A549 (cell line): ENCODE measurements at regions of chr3 and their contacts with region 1.

Region 1: DNA sequence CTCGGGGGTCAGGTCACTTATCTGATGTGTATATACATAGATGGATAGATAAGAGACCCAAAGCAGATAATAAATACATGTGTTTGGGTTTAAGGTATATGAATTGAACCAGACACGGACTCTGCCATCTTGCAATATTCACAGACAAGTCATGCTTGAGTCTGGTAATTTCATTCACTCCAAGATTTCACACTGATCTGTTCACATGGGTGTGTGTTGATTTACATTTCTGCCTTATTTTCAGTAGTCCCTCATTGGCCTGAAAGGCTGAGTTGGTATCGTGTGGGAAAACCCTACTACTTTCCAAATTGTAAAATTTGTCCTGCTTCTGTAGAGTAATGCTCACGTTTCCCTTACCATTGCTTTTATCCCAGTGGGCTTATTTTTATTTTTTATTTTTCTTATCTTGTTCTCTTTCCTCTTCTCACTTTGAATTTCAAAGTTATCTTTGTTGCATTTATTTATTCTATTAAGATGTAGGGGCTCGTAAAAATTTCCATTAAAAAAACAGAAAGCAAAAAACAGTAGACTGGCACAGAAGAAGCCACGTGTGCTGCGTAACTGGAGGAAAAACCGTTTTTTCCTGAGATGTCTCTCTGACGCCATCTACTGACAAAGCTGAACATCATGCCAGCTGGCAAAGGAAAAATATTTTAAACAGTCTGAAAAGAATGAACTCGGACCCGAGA is 10.8 kb upstream of the MFSD1 start:
- DNase-seq: peak; percentile 54 to 76
- ATAC-seq: peak; percentile 35 to 61; a peak in 3 of 6 replicates
- H3K4me3 ChIP-seq: no peak overlapping the region
- H3K27ac ChIP-seq: peak overlapping the region; percentile 79
- H3K4me1 ChIP-seq: peaks cover 55% of the 10 kb centered on the region
- CTCF ChIP-seq: peak; percentile 91
- EP300 ChIP-seq: no peak
- POLR2A ChIP-seq: no peak
- RAD21 ChIP-seq: peak; percentile 88 to 94

Region 2: GRCh38 chr3:158644345-158644908 is 146.6 kb before region 1 on chr3 and contains the start of gene GFM1:
- CTCF ChIA-PET with region 1: interaction called, 10 read pairs
- POLR2A ChIA-PET with region 1: no interaction called
- DNase-seq: peak; percentile 82 to 97
- ATAC-seq: peak; percentile 98 to 100
- H3K4me3 ChIP-seq: peak within 1 kb of the TSS; percentile 72
- H3K27ac ChIP-seq: peak within 1 kb of the TSS; percentile 87 to 99
- H3K4me1 ChIP-seq: peaks cover 14% of the 10 kb centered on the region
- CTCF ChIP-seq: peak; percentile 94
- EP300 ChIP-seq: no peak
- POLR2A ChIP-seq: peak; percentile 57; the same call in 1 of the 2 replicates
- RAD21 ChIP-seq: peak; percentile 49 to 53
- polyA plus RNA-seq, gene GFM1: 54.5 and 71.4 TPM in 2 replicates

Region 3: GRCh38 chr3:158672293-158673176 is 118.5 kb before region 1 on chr3 and contains the start of gene LXN:
- CTCF ChIA-PET with region 1: interaction called, 10 read pairs
- POLR2A ChIA-PET with region 1: interaction called, 3 read pairs
- DNase-seq: peak; percentile 89 to 96
- ATAC-seq: peak; percentile 100
- H3K4me3 ChIP-seq: peak within 1 kb of the TSS; percentile 58
- H3K27ac ChIP-seq: peak within 1 kb of the TSS; percentile 82 to 90
- H3K4me1 ChIP-seq: peaks cover 18% of the 10 kb centered on the region
- CTCF ChIP-seq: peak; percentile 66
- EP300 ChIP-seq: no peak
- POLR2A ChIP-seq: peak; percentile 64
- RAD21 ChIP-seq: peak; percentile 60 to 61; a peak in 4 of 5 replicates
- polyA plus RNA-seq, gene LXN: 131 and 135 TPM in 2 replicates

Region 4: DNA sequence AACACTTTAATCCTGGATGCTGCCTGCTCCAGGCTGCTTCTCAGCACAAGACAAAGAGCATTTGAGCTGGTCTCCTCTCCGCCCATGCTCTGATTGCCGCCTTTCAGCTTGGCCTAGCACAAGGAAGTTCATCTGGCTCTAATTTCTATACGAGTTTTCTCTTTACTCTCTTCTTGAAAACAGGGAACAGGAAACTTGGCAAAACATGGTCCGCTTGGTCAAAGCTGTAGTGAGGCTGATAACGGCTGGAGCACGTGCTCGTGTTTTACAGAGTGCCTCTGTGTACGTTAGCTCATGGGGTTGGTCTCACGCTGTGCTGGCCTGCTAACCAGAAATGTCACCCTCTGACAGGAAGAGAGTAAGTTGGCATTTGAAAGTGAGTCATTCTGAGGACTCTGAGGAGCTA is 77.9 kb before region 1 on chr3:
- CTCF ChIA-PET with region 1: interaction called, 10 read pairs
- POLR2A ChIA-PET with region 1: no interaction called
- DNase-seq: no peak
- ATAC-seq: no peak
- H3K4me3 ChIP-seq: no peak overlapping the region
- H3K27ac ChIP-seq: peak overlapping the region in 1 of 2 experiments; percentile 74; a peak in 3 of 6 replicates
- H3K4me1 ChIP-seq: peaks cover 72% of the 10 kb centered on the region
- CTCF ChIP-seq: no peak
- EP300 ChIP-seq: no peak
- POLR2A ChIP-seq: no peak
- RAD21 ChIP-seq: no peak

Region 5: DNA sequence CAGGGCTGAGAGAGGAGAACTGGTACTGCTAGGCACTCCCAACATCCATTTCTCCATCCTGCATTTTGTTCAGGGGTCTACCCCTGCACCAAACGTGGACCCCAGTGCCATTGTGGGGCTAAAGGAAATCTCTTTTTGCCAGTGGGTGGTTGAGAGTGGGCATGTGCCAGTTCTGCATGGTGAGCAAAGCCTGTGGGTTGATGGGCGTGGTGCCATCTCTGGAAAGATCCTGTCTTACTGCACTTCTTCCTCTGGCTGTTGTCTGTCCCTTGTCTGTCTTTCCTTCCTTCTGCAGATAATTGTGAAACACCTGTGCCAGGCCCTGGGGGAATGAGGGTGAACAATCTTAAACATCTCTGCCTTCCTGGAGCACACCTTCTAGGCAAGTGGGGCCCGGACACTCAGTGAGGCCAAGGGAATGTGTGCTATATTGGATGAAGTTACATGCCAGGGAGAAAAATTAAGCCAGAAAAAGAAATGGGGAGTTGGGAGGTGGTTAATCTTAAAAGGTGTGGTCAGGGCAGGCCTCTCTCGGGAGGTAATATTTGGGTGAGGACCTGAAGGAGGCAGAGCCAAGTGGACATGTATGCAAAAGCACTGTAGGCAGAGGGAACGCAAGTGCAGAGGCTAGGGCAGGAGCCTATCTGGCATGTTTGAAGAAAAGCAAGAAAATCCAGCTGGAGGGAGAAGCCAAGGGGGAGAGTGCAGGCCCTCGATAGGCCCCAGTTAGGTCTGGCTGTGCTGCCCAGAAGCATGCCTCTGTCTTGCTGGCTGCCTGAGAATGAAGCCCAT is 57.2 kb before region 1 on chr3:
- CTCF ChIA-PET with region 1: interaction called, 202 read pairs
- POLR2A ChIA-PET with region 1: interaction called, 3 read pairs
- DNase-seq: no peak
- ATAC-seq: no peak
- H3K4me3 ChIP-seq: no peak overlapping the region
- H3K27ac ChIP-seq: peak overlapping the region in 1 of 2 experiments; percentile 92; a peak in 1 of 6 replicates
- H3K4me1 ChIP-seq: peaks cover 15% of the 10 kb centered on the region
- CTCF ChIP-seq: no peak
- EP300 ChIP-seq: no peak
- POLR2A ChIP-seq: no peak
- RAD21 ChIP-seq: no peak

Region 6: GRCh38 chr3:158748237-158748828 is 42.7 kb before region 1 on chr3:
- CTCF ChIA-PET with region 1: interaction called, 13 read pairs
- POLR2A ChIA-PET with region 1: no interaction called
- DNase-seq: no peak
- ATAC-seq: no peak
- H3K4me3 ChIP-seq: no peak overlapping the region
- H3K27ac ChIP-seq: peak overlapping the region; percentile 61 to 77; a peak in 5 of 6 replicates
- H3K4me1 ChIP-seq: peaks cover 28% of the 10 kb centered on the region
- CTCF ChIP-seq: no peak
- EP300 ChIP-seq: no peak
- POLR2A ChIP-seq: no peak
- RAD21 ChIP-seq: no peak

Region 7: GRCh38 chr3:158777161-158777873 is 13.7 kb before region 1 on chr3:
- CTCF ChIA-PET with region 1: interaction called, 26 read pairs
- POLR2A ChIA-PET with region 1: no interaction called
- DNase-seq: no peak
- ATAC-seq: no peak
- H3K4me3 ChIP-seq: no peak overlapping the region
- H3K27ac ChIP-seq: peak overlapping the region in 1 of 2 experiments; percentile 21; a peak in 2 of 6 replicates
- H3K4me1 ChIP-seq: peaks cover 37% of the 10 kb centered on the region
- CTCF ChIP-seq: no peak
- EP300 ChIP-seq: no peak
- POLR2A ChIP-seq: no peak
- RAD21 ChIP-seq: no peak

Region 8: GRCh38 chr3:159158213-159158612 is 367.2 kb after region 1 on chr3:
- CTCF ChIA-PET with region 1: no interaction called
- POLR2A ChIA-PET with region 1: no interaction called
- DNase-seq: no peak
- ATAC-seq: 0 out of 6 replicates have a peak, but pooled peaks of 1 of the 2 experiments have one; percentile 34
- H3K4me3 ChIP-seq: no peak overlapping the region
- H3K27ac ChIP-seq: no peak overlapping the region
- H3K4me1 ChIP-seq: no peaks in the 10 kb centered on the region
- CTCF ChIP-seq: no peak
- EP300 ChIP-seq: no peak
- POLR2A ChIP-seq: no peak
- RAD21 ChIP-seq: no peak